Posterior vena cava (tissue), 2 donors: ENCODE measurements at regions of chr7 and their contacts with region 1.

Region 1: DNA sequence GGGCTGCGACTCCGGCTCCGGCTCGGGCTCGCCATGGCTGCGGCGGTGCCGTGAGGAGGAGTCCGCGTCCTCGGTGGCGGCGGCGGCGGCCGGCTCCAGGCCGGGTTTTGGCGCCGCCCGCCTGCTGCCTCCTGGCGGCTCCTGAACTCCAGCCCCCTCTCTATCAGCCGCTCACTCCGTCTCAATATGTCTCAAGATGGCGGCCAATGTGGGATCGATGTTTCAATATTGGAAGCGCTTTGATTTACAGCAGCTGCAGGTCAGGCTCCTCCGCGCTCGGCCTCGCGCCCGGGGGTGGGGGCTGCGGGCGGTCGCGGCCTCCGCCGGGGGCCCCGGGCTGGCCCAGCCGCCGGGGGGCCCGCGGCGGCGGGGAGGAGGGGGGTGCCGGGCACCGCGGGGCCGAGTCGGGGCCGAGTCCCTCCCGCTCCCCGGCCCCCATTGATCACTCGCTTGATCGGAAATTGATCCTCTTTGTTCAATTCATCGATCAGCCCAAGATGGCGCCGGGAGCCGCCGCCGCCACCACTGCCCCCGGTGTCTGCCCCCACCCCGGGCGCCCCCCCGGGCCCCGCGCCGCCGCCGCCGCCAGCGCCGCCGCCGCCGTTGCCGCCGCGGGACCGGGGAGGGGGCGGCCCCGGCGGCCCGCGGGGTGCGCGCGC is 1.5 kb upstream of the CUX1 start:
- DNase-seq: peak; percentile 92

Region 2: DNA sequence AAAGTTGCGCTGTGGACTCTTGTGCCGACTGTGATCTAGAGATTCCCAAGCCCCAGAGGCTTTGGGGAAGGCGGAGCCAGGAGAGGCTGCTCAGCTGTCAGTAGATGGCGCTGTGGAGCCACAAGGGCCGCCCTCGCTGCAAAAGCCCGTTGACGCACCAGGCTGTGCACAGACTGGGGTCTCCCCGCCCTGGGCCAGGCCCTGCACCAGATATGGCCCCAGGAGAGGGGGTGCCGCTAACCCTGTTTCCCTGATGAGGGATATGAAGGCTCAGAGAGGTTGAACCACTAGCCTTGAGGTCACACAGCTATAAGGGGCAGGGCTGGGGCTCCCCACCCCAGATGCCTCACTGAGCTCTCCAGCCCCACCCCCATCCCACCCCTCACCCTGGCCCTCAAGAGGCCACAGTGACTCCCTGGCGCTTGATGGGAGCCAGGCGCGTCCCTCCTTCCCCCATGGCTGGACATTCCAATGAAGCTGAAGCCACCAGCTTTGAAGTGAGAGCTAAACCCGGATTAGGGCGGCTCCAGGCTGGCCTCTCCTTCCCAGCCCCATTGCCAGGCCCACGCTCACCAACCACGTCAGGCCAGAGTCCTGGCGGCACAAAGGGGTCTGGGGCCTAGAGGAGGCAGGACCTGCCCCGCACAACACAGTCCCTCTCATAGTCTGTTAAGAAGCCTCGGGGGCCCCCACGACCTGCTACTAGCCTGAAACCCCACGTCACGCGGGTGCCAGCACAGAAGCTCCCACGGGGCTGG is 213.3 kb before region 1 on chr7:
- intact Hi-C with region 1: loop called in 1 of 2 experiments (anchors 10 kb)
- DNase-seq: peak; percentile 94

Region 3: DNA sequence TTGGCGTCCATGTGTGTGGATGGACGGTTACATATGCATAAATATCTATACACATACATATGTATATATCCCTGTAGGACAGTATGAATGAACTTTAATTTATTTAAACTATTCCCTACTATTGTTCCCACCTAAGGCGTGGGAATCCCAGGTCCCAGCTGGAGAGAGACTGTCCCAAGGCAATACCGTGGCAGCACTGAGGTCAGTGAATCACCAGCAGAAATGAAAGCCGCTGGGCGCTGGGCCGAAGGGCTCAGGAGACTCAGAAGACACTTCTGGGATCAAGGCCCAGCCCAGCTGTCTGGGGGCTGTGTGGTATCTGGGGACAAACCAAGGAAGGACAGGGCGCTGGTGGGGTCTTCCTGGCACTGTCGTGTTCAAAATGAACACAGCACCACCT is 137.3 kb before region 1 on chr7:
- intact Hi-C with region 1: loop called in 1 of 2 experiments (anchors 2 kb)
- DNase-seq: peak; percentile 86

Region 4: DNA sequence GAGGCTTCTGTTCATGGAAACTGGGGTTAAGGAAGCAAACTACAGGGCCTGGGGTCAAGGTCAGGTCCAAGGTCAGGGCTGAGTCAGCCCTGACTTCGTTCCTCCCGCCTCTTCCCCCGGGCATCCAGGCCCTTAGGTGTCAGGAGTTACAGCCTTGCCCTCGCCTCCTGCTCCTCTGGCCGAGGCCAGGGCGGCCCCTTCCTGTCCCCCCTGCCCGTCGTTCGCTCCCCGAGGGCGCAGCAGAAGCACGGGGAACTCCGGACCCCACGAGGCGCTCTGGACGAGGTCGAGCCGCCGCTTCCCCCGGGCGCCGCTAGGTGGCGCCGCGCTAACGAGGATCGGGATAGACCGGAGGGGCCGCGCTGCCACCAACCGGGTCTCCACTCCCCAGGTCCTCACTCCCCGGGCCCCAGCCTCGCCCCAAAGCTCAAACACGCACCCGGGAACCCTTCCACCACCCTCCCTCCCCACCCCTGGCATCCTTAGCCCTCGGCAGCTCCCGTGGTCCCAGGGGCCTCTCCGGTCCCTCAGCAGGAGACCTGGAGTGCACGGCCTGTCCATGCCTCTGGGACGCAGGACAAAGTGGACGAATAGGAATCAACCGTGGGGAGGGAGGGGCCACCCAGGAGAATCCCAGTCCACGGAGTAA is 127.7 kb before region 1 on chr7:
- intact Hi-C with region 1: loop called in 1 of 2 experiments (anchors 5 kb)
- DNase-seq: peak; percentile 95

Region 5: GRCh38 chr7:101882595-101883564 is 66.9 kb after region 1 on chr7:
- intact Hi-C with region 1: loop called in 1 of 2 experiments (anchors 5 kb)
- DNase-seq: peak; percentile 93

Region 6: DNA sequence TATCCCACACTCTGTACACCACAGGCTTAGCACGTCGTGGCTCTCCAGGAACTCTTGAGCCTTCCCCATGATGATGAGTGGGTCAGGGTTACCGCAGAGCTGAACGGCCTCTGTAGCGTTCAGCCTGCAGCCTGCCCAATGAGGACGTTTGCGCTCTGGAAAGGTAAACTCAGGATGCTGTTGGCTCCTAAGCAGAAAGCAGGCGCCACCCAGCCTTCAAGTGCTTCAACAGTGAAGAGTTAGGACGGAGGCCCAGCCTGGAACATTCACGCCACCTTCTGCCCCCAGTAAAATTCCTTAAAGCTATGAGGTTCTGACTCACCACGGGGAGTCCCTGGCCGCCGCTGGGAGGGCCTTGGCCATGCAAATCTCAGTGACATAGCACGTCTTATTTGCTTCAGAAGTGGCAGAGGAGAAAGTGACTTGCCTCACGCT is 309.2 kb after region 1 on chr7:
- intact Hi-C with region 1: loop called (anchors 10 kb)
- DNase-seq: peak; percentile 91

Region 7: GRCh38 chr7:102236592-102237287 is 420.8 kb after region 1 on chr7:
- intact Hi-C with region 1: loop called in 1 of 2 experiments (anchors 10 kb)
- DNase-seq: no peak